Breast epithelium (tissue), 4 donors: ENCODE measurements at regions of chr19 and their contacts with region 1.

Region 1: DNA sequence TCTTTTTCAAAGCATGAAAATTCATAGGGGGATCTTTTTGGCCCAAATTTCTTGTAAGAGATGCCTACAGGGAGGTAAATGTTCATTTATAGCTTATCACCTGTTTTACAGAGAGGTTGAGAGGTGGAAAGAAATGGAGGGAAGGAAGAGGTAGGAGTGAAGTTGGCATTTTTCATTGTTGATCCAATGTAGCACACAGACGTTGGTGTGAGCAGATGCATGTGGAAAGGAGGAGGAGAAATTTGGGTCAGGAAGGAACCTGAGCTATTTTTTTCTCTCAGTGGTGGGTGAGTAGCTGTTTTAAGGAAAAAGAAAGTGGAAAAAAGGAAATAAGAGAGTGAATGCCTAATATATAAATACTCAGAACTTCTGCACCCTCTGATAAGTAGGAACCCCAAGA is 9.9 kb upstream of the SMIM17 start:
- DNase-seq: no peak
- H3K4me3 ChIP-seq: no peak overlapping the region
- H3K27ac ChIP-seq: no peak overlapping the region
- H3K4me1 ChIP-seq: no peaks in the 10 kb centered on the region
- H3K27me3 ChIP-seq: no peaks in the 10 kb centered on the region
- CTCF ChIP-seq: no peak
- POLR2A ChIP-seq: no peak

Region 2: GRCh38 chr19:56348289-56348877 is 284.6 kb before region 1 on chr19:
- intact Hi-C with region 1: loop called (anchors 5 kb)
- DNase-seq: no peak
- H3K4me3 ChIP-seq: no peak overlapping the region
- H3K27ac ChIP-seq: no peak overlapping the region
- H3K4me1 ChIP-seq: no peaks in the 10 kb centered on the region
- H3K27me3 ChIP-seq: no peaks in the 10 kb centered on the region
- CTCF ChIP-seq: no peak
- POLR2A ChIP-seq: no peak

Region 3: GRCh38 chr19:56611288-56611687 is 21.7 kb before region 1 on chr19:
- intact Hi-C with region 1: loop called (anchors 1 kb)
- DNase-seq: no peak
- H3K4me3 ChIP-seq: no peak overlapping the region
- H3K27ac ChIP-seq: no peak overlapping the region
- H3K4me1 ChIP-seq: no peaks in the 10 kb centered on the region
- H3K27me3 ChIP-seq: no peaks in the 10 kb centered on the region
- CTCF ChIP-seq: no peak
- POLR2A ChIP-seq: no peak